ENCODE measurements at regions of chr2 and their contacts with region 1.

Region 1: DNA sequence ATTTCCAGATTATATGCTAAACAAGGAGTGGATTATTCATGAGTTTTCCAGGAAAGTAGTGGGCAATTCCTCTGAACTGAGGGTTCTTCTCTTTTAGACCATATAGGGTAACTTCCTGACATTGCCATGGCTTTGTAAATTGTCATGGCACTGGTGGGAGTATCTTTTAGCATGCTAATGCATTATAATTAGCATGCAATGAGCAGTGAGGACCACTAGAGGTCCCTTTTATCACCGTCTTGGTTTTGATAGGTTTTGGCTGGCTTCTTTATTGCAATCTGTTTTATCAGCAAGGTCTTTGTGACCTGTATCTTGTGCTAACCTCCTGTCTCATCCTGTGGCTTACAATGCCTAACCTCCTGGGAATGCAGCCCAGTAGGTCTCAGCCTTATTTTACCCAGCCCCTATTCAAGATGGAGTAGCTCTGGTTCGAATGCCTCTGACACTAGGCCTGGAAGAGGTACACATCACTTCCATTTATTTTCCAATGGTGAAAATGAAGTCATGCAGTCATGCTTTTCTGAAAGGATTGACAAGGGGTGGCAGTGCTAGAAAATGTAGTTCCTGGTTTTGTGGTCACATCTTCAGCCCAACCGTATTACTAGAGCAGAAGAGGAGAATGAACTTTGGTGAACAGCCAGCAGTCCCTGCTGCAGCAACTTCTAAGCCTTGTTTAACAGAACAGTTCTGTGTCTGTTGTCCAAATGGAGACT is 26.6 kb upstream of the ITGA4 start:
- DNase-seq: no peak
- ATAC-seq: peak; percentile 92
- H3K4me3 Mint-ChIP-seq: no peak overlapping the region
- H3K27ac Mint-ChIP-seq: peak overlapping the region; percentile 82
- H3K4me1 Mint-ChIP-seq: peaks cover 17% of the 10 kb centered on the region
- H3K27me3 Mint-ChIP-seq: no peaks in the 10 kb centered on the region
- CTCF ChIP-seq: no peak

Region 2: GRCh38 chr2:181203412-181203811 is 227.2 kb before region 1 on chr2:
- CTCF ChIA-PET with region 1: no interaction called
- POLR2A ChIA-PET with region 1: no interaction called
- intact Hi-C with region 1: no loop called
- DNase-seq: no peak
- ATAC-seq: no peak
- H3K4me3 Mint-ChIP-seq: no peak overlapping the region
- H3K27ac Mint-ChIP-seq: no peak overlapping the region
- H3K4me1 Mint-ChIP-seq: peaks cover 3% of the 10 kb centered on the region
- H3K27me3 Mint-ChIP-seq: no peaks in the 10 kb centered on the region
- CTCF ChIP-seq: no peak

Region 3: GRCh38 chr2:181411105-181411849 is 19.3 kb before region 1 on chr2:
- CTCF ChIA-PET with region 1: interaction called, 4 read pairs
- POLR2A ChIA-PET with region 1: interaction called, 4 read pairs
- intact Hi-C with region 1: loop called (anchors 2 kb)
- DNase-seq: peak; percentile 54
- ATAC-seq: peak; percentile 98
- H3K4me3 Mint-ChIP-seq: peak overlapping the region; percentile 52
- H3K27ac Mint-ChIP-seq: peak overlapping the region; percentile 86
- H3K4me1 Mint-ChIP-seq: peaks cover 88% of the 10 kb centered on the region
- H3K27me3 Mint-ChIP-seq: no peaks in the 10 kb centered on the region
- CTCF ChIP-seq: no peak

Region 4: DNA sequence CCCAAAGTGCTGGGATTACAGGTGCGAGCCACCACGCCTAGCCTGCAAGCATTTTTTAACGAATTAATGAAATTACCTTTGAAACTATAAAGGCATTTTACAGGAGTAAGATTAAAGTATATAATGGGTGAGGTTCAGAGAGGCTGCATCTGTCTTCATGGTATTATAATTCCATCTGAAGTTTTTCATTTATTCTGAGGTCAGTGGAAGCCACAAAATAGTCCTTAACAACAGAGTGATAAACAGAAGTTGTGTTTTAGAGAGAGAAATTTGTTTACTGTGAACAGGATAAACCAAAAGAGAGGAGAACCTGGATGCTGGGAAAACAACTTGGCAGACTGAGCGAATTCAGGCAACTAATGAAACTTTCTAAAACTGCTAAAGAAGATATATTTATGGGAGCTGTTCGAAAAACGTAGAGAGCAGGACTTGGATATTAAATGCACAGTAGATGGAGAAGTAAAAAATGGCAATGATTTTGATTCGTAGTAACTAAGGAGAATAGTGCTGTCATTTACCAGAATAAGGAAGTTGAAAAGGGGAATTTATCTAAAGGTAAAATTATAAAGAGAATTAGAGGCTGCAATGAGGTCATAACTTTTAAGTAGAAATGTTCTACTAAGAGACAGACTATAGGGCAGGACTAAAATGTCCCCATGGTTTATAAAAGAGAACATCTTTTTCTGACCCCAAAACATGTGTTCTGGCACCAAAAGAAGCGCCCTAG is 11.3 kb before region 1 on chr2:
- CTCF ChIA-PET with region 1: no interaction called
- POLR2A ChIA-PET with region 1: no interaction called
- intact Hi-C with region 1: loop called (anchors 1 kb)
- DNase-seq: no peak
- ATAC-seq: peak; percentile 82
- H3K4me3 Mint-ChIP-seq: peak overlapping the region; percentile 20
- H3K27ac Mint-ChIP-seq: peak overlapping the region; percentile 87
- H3K4me1 Mint-ChIP-seq: peaks cover 75% of the 10 kb centered on the region
- H3K27me3 Mint-ChIP-seq: no peaks in the 10 kb centered on the region
- CTCF ChIP-seq: no peak

Region 5: DNA sequence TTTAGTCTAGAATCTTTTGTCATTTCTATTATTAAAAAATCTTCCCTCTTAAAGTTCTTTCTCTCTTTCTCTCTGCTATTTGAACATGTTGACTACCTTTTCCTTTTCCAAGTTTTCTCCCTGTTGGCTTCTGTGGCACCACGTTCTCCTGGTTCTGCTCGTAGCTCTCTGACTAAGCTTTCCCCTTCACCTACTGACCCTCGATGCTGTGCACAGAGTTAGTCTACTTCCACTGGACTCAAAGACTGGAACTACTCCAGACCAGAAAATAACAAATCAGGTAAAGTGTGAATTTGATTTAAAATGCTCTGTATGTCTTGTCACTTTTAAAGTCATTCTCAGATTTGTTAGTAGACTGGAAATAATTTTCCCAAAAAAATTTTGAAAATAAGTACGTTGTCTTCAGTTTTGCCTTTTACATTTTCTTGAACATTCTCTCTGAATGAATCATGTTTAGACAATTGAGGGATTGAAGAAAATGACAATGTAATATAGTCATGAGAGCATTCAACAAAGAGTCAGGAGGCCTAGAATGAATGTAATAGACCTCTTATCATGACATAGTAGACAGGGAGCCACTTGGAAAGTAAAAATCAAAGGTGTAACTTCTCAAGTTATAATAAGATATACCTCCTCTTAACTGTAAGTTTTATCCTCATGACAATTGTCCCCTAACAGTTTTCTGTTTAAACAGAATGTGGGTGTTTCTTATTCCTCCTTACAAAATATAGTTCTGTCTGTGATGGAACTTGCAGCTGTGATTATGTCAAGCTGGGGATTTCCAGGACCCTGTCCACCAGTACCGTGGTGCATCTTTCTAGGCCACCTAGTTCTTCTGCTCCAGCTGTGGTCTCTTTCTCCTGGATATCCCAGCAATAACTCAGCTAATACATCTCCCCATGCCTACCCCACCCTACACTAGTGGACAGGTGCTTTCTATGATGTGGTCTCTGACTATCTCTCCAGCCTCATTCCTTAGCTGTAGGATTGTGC is 486.5 kb after region 1 on chr2:
- CTCF ChIA-PET with region 1: no interaction called
- POLR2A ChIA-PET with region 1: no interaction called
- intact Hi-C with region 1: no loop called
- DNase-seq: no peak
- ATAC-seq: no peak
- H3K4me3 Mint-ChIP-seq: no peak overlapping the region
- H3K27ac Mint-ChIP-seq: no peak overlapping the region
- H3K4me1 Mint-ChIP-seq: no peaks in the 10 kb centered on the region
- H3K27me3 Mint-ChIP-seq: no peaks in the 10 kb centered on the region
- CTCF ChIP-seq: no peak

Measured in activated B cell treated with CpG ODN at 0.5 μM for 24 hours (primary cell).